OCI-LY7 (cell line): ENCODE measurements at regions of chr2 and their contacts with region 1.

Region 1: DNA sequence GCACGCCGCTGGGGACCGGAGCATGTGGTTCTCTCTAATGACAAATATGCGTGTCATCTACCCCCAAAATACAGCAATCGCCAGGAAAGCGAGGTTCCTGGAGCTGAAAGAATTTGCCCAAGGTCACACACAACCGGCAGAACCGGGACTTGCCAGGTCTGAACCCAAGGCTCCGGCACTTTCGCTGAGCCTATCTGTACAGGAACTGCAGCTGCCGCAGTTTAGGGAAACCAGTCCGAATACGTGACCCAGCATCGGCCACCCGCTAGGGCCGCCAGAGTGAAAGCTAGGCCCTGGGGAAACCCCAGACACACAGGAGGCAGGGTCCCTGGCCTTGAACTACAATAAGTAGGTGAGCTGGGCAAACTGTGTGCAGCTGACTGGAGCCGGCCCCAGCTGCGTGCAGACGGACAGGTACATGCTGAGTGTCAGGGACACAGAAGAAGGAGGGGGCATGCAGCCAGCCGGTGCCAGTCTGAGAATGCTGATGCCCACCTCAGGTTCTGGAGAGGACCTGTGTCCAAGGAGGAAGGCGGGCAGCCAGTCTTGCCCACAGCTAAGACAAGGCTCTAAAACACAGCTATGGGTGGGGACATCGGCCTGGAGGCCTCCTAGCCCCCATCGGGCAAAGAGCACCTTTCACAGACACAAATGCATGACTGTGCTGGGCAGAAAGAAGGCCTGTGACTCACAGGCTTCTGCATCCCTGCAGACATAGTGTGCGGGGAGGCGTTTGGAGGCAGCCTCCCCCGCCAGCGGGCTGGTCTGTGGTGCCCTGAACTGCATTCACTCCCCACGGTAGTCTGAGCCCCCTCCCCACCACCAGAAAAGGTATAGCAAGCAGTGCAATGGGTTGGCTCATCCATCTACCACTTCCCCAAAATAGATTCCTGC is 107.5 kb upstream of the ID2 start:
- DNase-seq: peak; percentile 96
- H3K4me3 ChIP-seq: peak overlapping the region; percentile 75
- H3K27ac ChIP-seq: peak overlapping the region; percentile 98
- H3K4me1 ChIP-seq: peaks cover 95% of the 10 kb centered on the region
- CTCF ChIP-seq: 0 out of 2 replicates have a peak, but pooled peaks have one; percentile 20

Region 2: DNA sequence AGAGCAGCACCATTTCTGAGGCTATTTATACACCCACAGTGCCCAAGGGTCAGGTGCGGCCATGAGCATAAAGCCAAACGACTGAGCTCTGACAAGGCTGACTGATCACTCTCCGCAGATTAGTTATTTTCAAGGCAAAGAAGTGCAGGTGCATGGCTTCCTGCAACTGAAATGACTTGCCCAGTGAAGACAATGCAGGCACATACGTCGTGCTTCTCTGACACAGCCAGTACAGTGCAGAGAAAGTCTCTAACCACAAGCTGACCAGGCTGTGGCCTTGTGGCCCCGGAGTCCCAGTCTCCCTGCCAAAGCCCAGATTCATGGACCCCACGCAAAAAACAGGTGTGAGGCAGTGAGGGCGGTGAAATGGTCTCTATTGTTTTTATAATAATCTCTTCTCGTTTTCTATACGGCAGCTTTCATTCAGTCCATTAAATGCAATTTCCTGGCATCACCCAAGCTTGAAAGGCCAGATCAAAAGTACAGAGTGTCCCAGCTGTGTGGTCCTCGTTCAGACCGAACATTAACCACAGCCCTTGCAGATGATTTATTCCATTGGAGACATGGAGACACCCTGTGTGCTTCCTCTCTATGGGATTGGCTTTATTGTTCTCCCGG is 339.5 kb before region 1 on chr2:
- CTCF ChIA-PET with region 1: no interaction called
- POLR2A ChIA-PET with region 1: interaction called, 18 read pairs
- intact Hi-C with region 1: loop called (anchors 2 kb)
- DNase-seq: peak; percentile 97
- H3K4me3 ChIP-seq: peak overlapping the region; percentile 41
- H3K27ac ChIP-seq: peak overlapping the region; percentile 97
- H3K4me1 ChIP-seq: peaks cover 99% of the 10 kb centered on the region
- CTCF ChIP-seq: no peak

Region 3: DNA sequence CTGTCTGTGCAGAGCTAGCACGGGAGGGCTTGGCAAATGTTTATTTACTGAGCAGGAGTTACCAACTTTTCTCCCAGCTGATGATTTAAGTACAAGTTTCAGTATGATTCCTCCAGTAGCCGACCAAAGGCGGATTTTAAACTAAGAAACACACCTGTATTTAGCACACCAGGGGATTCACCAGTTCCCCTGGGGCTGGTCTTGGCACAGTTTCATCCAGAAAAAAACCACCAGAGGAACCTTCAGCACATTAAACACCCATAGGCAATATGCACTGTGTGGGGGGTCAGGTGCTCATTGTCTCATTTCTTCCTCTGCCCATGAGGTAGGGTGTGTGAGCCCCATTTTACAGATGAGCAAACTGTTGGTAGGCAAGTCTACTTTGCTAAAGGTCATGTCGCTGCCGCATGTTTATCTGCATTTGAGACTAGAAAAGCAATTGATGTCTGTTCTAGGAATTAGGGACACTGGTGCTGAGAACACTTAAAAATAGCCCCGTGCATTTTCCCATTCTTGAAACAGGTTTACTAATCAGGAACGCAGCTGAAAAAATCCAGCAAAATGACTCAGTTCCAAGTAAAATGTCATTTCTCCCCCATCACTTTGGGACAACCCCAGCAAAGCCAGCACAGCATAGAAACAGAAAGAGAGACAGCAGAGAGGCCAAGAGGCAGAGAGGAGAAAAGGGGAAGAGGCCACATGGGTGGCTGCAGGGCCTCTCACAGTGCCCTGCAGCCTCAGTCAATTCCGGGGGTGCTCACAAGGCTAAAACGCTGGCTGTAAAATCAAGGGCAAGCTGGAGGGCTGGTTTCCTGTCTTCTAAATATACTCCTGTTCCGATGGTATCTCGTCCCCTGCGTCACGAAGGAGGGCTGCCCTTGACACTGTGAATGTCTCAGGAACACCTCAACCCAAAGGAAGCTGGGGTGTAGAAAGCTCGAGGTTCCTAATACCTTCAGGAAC is 59.3 kb before region 1 on chr2:
- CTCF ChIA-PET with region 1: interaction called, 3 read pairs
- POLR2A ChIA-PET with region 1: interaction called, 107 read pairs
- intact Hi-C with region 1: loop called (anchors 2 kb)
- DNase-seq: peak; percentile 88
- H3K4me3 ChIP-seq: peak overlapping the region; percentile 47
- H3K27ac ChIP-seq: peak overlapping the region; percentile 95
- H3K4me1 ChIP-seq: peaks cover 68% of the 10 kb centered on the region
- CTCF ChIP-seq: no peak

Region 4: GRCh38 chr2:8539743-8540551 is 34.4 kb before region 1 on chr2:
- CTCF ChIA-PET with region 1: interaction called, 16 read pairs
- POLR2A ChIA-PET with region 1: interaction called, 28 read pairs
- intact Hi-C with region 1: loop called (anchors 2 kb)
- DNase-seq: no peak
- H3K4me3 ChIP-seq: no peak overlapping the region
- H3K27ac ChIP-seq: peak overlapping the region; percentile 23
- H3K4me1 ChIP-seq: peaks cover 100% of the 10 kb centered on the region
- CTCF ChIP-seq: peak; percentile 37; the same call in 1 of the 2 replicates

Region 5: GRCh38 chr2:8558096-8558495 is 16.3 kb before region 1 on chr2:
- CTCF ChIA-PET with region 1: interaction called, 6 read pairs
- POLR2A ChIA-PET with region 1: interaction called, 168 read pairs
- intact Hi-C with region 1: no loop called
- DNase-seq: no peak
- H3K4me3 ChIP-seq: no peak overlapping the region
- H3K27ac ChIP-seq: peak overlapping the region; percentile 38
- H3K4me1 ChIP-seq: peaks cover 49% of the 10 kb centered on the region
- CTCF ChIP-seq: no peak